CD8-positive, alpha-beta T cell (primary cell): ENCODE measurements at regions of chr2 and their contacts with region 1.

Region 1: GRCh38 chr2:199739413-199740110 is 111.4 kb downstream of the FTCDNL1 start:
- DNase-seq: peak; percentile 34 to 73 (median 53)
- ATAC-seq: no peak
- H3K4me3 ChIP-seq: no peak overlapping the region
- H3K4me3 Mint-ChIP-seq: no peak overlapping the region
- H3K27ac ChIP-seq: no peak overlapping the region
- H3K27ac Mint-ChIP-seq: no peak overlapping the region
- H3K4me1 ChIP-seq: no peaks in the 10 kb centered on the region
- H3K4me1 Mint-ChIP-seq: peaks cover 5% of the 10 kb centered on the region
- H3K27me3 ChIP-seq: peaks cover 0 to 3% of the 10 kb centered on the region in 2 experiments
- H3K27me3 Mint-ChIP-seq: peaks cover 12% of the 10 kb centered on the region
- CTCF ChIP-seq: peak; percentile 96

Region 2: DNA sequence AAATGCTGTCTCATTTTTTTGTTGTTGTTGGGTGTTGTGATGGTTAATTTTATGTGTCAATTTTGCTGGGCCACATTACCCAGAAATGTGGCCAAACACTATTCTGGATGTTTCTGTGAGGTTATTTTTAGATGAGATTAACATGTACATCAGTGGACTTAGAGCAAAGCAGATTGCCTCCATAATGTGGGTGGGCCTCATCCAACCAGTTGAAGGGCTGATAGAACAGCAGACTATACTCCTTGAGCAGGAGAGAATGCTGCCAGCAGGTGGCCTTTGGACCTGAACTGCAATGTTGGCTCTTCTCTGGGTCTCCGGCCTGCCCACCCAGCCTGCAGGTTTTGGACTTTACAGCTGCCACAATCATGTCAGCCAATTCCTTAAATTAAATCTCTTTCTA is 57.6 kb before region 1 on chr2:
- CTCF ChIA-PET with region 1: no interaction called
- POLR2A ChIA-PET with region 1: no interaction called
- intact Hi-C with region 1: no loop called
- DNase-seq: no peak
- ATAC-seq: no peak
- H3K4me3 ChIP-seq: no peak overlapping the region
- H3K4me3 Mint-ChIP-seq: no peak overlapping the region
- H3K27ac ChIP-seq: no peak overlapping the region
- H3K27ac Mint-ChIP-seq: no peak overlapping the region
- H3K4me1 ChIP-seq: peaks cover 8% of the 10 kb centered on the region
- H3K4me1 Mint-ChIP-seq: peaks cover 10% of the 10 kb centered on the region
- H3K27me3 ChIP-seq: peaks cover 0 to 3% of the 10 kb centered on the region in 2 experiments
- H3K27me3 Mint-ChIP-seq: peaks cover 12% of the 10 kb centered on the region
- CTCF ChIP-seq: no peak

Region 3: DNA sequence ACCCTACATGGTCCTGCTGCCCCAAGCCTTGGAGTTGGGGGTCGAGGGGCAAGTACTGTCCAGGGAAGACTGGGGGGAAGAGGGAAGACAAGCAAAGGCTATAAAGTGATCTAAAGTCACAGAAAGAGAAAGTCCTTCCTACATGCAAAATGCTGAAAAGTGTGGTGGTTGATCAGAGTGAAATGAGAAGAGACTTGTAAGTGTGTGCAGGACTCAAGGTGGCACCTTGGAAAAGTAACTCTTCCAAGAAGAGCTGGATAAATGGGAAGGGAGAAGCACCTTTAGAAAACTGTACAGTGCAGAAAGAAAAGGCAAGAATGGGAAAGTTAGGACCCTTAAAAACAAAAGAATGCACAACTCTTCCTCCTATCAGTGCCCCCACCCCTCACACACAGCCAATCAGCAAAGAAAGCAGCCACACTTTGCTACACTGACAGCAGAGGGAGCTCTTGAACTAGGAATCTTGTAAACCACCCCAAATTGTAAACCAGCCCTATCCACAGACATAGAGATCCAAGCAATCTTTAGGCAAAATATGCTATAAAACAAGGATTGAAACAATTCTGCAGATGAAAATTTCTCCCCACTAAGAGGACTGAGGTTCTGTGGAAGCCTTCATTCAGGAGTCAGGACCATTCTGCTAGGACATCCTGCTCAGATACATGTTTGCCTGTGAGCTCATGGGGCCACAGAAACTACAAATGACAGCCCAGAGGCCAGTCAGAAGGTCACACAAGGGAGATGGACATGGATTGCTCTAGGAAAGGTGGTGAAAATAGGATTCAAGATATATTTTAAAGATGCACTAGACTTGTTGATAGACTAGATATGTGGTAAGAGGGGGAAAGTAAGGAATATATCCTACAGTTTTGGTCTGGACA is 35.0 kb before region 1 on chr2:
- CTCF ChIA-PET with region 1: interaction called, 11 read pairs
- POLR2A ChIA-PET with region 1: no interaction called
- intact Hi-C with region 1: no loop called
- DNase-seq: peak in 2 of 9 experiments; percentile 26 to 33
- ATAC-seq: no peak
- H3K4me3 ChIP-seq: no peak overlapping the region
- H3K4me3 Mint-ChIP-seq: no peak overlapping the region
- H3K27ac ChIP-seq: no peak overlapping the region
- H3K27ac Mint-ChIP-seq: no peak overlapping the region
- H3K4me1 ChIP-seq: no peaks in the 10 kb centered on the region
- H3K4me1 Mint-ChIP-seq: no peaks in the 10 kb centered on the region
- H3K27me3 ChIP-seq: no peaks in the 10 kb centered on the region
- H3K27me3 Mint-ChIP-seq: peaks cover 4% of the 10 kb centered on the region
- CTCF ChIP-seq: no peak

Region 4: DNA sequence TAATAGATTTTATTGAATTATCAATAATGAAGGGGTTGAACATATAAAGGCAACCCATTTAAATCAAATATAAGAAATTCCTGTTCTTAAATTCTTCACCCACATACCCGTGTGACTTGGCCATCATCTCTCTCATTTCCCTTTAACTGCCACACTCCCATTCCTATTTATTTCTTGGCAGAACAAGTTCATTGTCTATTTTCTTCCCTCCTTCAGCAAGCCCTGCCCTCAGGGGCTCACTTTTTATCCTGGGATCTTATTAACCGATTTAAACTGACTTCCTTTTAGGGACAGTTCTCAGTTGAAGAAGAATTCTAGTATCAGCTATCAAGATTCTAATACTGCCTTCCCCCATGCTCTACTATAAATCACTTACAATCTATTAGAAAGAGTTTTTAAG is 11.8 kb before region 1 on chr2:
- CTCF ChIA-PET with region 1: interaction called, 29 read pairs
- POLR2A ChIA-PET with region 1: no interaction called
- intact Hi-C with region 1: no loop called
- DNase-seq: no peak
- ATAC-seq: no peak
- H3K4me3 ChIP-seq: no peak overlapping the region
- H3K4me3 Mint-ChIP-seq: no peak overlapping the region
- H3K27ac ChIP-seq: no peak overlapping the region
- H3K27ac Mint-ChIP-seq: no peak overlapping the region
- H3K4me1 ChIP-seq: no peaks in the 10 kb centered on the region
- H3K4me1 Mint-ChIP-seq: no peaks in the 10 kb centered on the region
- H3K27me3 ChIP-seq: peaks cover 0 to 3% of the 10 kb centered on the region in 2 experiments
- H3K27me3 Mint-ChIP-seq: peaks cover 44% of the 10 kb centered on the region
- CTCF ChIP-seq: no peak

Region 5: GRCh38 chr2:199751472-199752120 is 12.0 kb after region 1 on chr2:
- CTCF ChIA-PET with region 1: interaction called, 20 read pairs
- POLR2A ChIA-PET with region 1: no interaction called
- intact Hi-C with region 1: no loop called
- DNase-seq: no peak
- ATAC-seq: no peak
- H3K4me3 ChIP-seq: no peak overlapping the region
- H3K4me3 Mint-ChIP-seq: no peak overlapping the region
- H3K27ac ChIP-seq: no peak overlapping the region
- H3K27ac Mint-ChIP-seq: no peak overlapping the region
- H3K4me1 ChIP-seq: no peaks in the 10 kb centered on the region
- H3K4me1 Mint-ChIP-seq: no peaks in the 10 kb centered on the region
- H3K27me3 ChIP-seq: no peaks in the 10 kb centered on the region
- H3K27me3 Mint-ChIP-seq: peaks cover 18% of the 10 kb centered on the region
- CTCF ChIP-seq: no peak

Region 6: GRCh38 chr2:199765646-199766045 is 26.1 kb after region 1 on chr2:
- CTCF ChIA-PET with region 1: interaction called, 12 read pairs
- POLR2A ChIA-PET with region 1: no interaction called
- intact Hi-C with region 1: no loop called
- DNase-seq: no peak
- ATAC-seq: no peak
- H3K4me3 ChIP-seq: no peak overlapping the region
- H3K4me3 Mint-ChIP-seq: no peak overlapping the region
- H3K27ac ChIP-seq: no peak overlapping the region
- H3K27ac Mint-ChIP-seq: no peak overlapping the region
- H3K4me1 ChIP-seq: no peaks in the 10 kb centered on the region
- H3K4me1 Mint-ChIP-seq: no peaks in the 10 kb centered on the region
- H3K27me3 ChIP-seq: no peaks in the 10 kb centered on the region
- H3K27me3 Mint-ChIP-seq: no peaks in the 10 kb centered on the region
- CTCF ChIP-seq: no peak

Region 7: GRCh38 chr2:199911052-199911876 is 171.7 kb after region 1 on chr2 and contains the start of gene C2orf69:
- CTCF ChIA-PET with region 1: no interaction called
- POLR2A ChIA-PET with region 1: no interaction called
- intact Hi-C with region 1: no loop called
- DNase-seq: peak; percentile 80 to 96 (median 91)
- ATAC-seq: peak; percentile 78
- H3K4me3 ChIP-seq: peak within 1 kb of the TSS; percentile 82 to 83
- H3K4me3 Mint-ChIP-seq: peak within 1 kb of the TSS; percentile 99
- H3K27ac ChIP-seq: peak within 1 kb of the TSS; percentile 84 to 93
- H3K27ac Mint-ChIP-seq: peak within 1 kb of the TSS; percentile 95
- H3K4me1 ChIP-seq: peaks cover 28% of the 10 kb centered on the region
- H3K4me1 Mint-ChIP-seq: peaks cover 38% of the 10 kb centered on the region
- H3K27me3 ChIP-seq: no peaks in the 10 kb centered on the region
- H3K27me3 Mint-ChIP-seq: peaks cover 6% of the 10 kb centered on the region
- CTCF ChIP-seq: no peak
- total RNA-seq, gene C2orf69: 16.3 to 17.5 TPM